Lower leg skin (tissue), 4 donors: ENCODE measurements at regions of chr16 and their contacts with region 1.

Region 1: GRCh38 chr16:69150146-69150865 is 17.9 kb downstream of the UTP4 start:
- DNase-seq: peak in 1 of 2 donors; percentile 57
- H3K4me3 ChIP-seq: no peak overlapping the region
- CTCF ChIP-seq: peak in 1 of 3 donors; percentile 40
- POLR2A ChIP-seq: no peak

Region 2: DNA sequence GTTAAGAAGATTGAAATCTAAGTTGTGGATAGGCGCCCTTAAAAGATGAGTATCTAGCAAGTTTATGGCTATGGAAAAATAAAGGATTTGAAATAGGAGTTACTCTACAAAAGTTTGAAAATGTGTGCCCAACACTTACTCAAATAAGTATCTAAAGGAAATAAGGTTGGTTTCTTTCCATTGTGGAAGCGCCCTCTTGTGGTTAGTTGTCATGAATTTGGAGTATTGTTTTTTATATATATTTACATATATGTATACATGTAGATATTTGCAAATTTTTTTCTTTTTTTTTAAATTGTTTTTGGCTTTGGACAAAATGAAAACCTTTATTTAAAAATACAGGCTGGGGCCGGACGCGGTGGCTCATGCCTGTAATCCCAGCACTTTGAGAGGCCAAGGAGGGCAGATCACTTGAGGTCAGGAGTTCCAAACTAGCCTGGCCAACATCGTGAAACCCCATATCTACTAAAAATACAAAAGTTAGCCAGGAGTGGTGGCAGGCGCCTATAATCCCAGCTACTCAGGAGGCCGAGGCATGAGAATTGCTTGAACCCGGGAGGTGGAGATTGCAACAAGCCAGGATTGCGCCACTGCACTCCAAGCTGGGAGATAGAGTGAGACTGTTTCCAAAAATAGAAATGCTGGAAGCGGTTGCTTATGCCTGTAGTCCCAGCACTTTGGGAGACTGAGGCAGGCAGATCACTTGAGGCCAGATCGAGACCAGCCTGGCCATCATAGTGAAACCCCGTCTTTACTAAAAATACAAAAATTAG is 136.8 kb after region 1 on chr16:
- intact Hi-C with region 1: loop called (anchors 2 kb)
- DNase-seq: peak; percentile 31 to 87
- H3K4me3 ChIP-seq: no peak overlapping the region
- CTCF ChIP-seq: peak in 1 of 3 donors; percentile 44
- POLR2A ChIP-seq: no peak